Astrocyte of the cerebellum (primary cell): ENCODE measurements at regions of chr17 and their contacts with region 1.

Region 1: DNA sequence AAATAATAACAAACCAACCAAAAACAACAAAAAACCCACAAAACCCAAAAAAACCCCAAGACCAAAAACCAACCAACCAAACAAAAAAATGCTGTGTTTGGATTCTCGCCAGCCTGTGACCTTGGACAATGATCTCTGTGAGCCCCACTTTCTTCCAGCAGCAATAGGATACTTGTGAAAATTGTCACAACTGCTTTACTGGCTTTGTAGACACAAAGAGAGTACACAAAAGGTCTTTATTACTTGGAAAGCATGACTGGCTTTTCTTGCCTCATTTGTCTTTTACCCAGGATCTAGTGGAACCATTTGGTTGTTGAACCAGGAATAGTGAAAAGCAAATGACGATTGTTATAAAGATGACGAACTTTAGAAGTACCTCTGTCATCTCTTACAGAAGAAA is 256.6 kb downstream of the UTP18 start:
- DNase-seq: no peak
- H3K4me3 ChIP-seq: no peak overlapping the region
- CTCF ChIP-seq: no peak

Region 2: DNA sequence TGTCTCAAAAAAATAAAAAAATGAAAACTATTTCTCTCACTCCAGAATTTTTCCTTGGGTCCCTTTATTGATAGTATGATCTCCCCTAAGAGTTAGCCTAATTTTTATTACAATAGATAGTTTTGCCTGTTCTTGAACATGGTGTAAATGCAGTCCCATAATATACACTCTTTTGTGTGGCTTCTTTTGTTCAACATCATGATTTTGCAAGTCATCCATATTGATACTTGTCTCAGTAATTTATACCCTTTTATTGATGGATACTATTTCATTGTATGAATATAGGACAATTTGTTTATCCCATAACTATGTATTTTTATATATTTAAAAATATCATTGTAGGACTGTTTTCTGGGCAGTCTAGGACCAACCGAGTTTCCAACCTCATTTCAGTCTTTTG is 49.6 kb before region 1 on chr17:
- in situ Hi-C with region 1: loop called (anchors 5 kb)
- DNase-seq: no peak
- H3K4me3 ChIP-seq: no peak overlapping the region
- CTCF ChIP-seq: no peak